Activated CD4-positive, alpha-beta T cell treated with anti-CD3 and anti-CD28 coated beads for 36 hours (primary cell): ENCODE measurements at regions of chr4 and their contacts with region 1.

Region 1: GRCh38 chr4:88523325-88524129 is at the start of gene PYURF:
- DNase-seq: peak; percentile 88
- ATAC-seq: peak; percentile 87
- H3K4me3 Mint-ChIP-seq: peak within 1 kb of the TSS; percentile 92
- H3K27ac Mint-ChIP-seq: peak within 1 kb of the TSS; percentile 88
- H3K4me1 Mint-ChIP-seq: peaks cover 45% of the 10 kb centered on the region
- H3K27me3 Mint-ChIP-seq: no peaks in the 10 kb centered on the region
- total RNA-seq, gene PYURF: 27.3 to 44.1 TPM

Region 2: GRCh38 chr4:87624698-87625097 is 898.8 kb before region 1 on chr4:
- CTCF ChIA-PET with region 1: no interaction called
- POLR2A ChIA-PET with region 1: no interaction called
- intact Hi-C with region 1: no loop called
- DNase-seq: no peak
- ATAC-seq: no peak
- H3K4me3 Mint-ChIP-seq: no peak overlapping the region
- H3K27ac Mint-ChIP-seq: no peak overlapping the region
- H3K4me1 Mint-ChIP-seq: no peaks in the 10 kb centered on the region
- H3K27me3 Mint-ChIP-seq: peaks cover 2% of the 10 kb centered on the region

Region 3: DNA sequence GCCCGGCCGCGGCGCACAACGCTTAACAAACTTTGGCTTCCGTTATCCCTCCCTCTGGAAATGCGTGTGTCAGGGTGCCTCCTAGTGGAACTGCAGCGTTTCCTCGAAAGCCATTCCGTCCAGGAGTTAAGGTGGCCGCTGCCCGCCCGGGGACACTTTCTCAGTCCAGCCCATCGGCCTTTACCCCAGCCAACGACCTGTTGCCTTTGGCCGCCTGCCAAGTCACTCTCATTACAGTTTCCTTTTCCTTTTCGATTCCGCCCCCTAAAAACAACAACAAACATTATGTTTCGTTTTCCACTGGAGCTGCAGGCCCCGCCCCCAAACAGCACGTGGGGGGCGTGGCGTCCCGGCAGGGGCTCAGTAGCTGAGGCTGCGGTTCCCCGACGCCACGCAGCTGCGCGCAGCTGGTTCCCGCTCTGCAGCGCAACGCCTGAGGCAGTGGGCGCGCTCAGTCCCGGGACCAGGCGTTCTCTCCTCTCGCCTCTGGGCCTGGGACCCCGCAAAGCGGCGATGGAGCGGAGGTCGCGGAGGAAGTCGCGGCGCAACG is 66.7 kb before region 1 on chr4 and contains the start of gene HERC5:
- CTCF ChIA-PET with region 1: no interaction called
- POLR2A ChIA-PET with region 1: interaction called, 4 read pairs
- intact Hi-C with region 1: loop called in 1 of 2 experiments (anchors 2 kb)
- DNase-seq: peak; percentile 94
- ATAC-seq: peak; percentile 94
- H3K4me3 Mint-ChIP-seq: peak within 1 kb of the TSS; percentile 87
- H3K27ac Mint-ChIP-seq: peak within 1 kb of the TSS; percentile 100
- H3K4me1 Mint-ChIP-seq: peaks cover 7% of the 10 kb centered on the region
- H3K27me3 Mint-ChIP-seq: no peaks in the 10 kb centered on the region
- total RNA-seq, gene HERC5: 21.1 TPM

Region 4: GRCh38 chr4:88659055-88659889 is 135.7 kb after region 1 on chr4:
- CTCF ChIA-PET with region 1: interaction called, 5 read pairs
- POLR2A ChIA-PET with region 1: no interaction called
- intact Hi-C with region 1: loop called (anchors 1 to 5 kb)
- DNase-seq: peak; percentile 54
- ATAC-seq: peak; percentile 81
- H3K4me3 Mint-ChIP-seq: no peak overlapping the region
- H3K27ac Mint-ChIP-seq: no peak overlapping the region
- H3K4me1 Mint-ChIP-seq: peaks cover 7% of the 10 kb centered on the region
- H3K27me3 Mint-ChIP-seq: no peaks in the 10 kb centered on the region

Region 5: DNA sequence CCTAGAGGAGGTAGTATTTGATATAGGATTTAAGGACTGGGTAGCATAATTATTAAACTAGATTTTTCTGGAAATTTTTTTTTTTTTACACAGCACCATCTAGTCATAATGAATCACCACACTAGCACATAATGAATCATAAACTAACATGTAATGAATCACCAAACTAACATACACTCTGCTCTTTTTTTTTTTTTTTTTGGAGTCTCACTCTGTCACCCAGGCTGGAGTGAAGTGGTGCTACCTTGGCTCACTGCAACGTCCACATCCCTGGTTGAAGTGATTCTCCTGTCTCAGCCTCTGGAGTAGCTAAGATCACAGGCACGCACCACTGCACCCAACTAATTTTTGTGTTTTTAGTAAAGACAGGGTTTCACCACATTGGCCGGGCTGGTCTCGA is 440.9 kb after region 1 on chr4:
- CTCF ChIA-PET with region 1: no interaction called
- POLR2A ChIA-PET with region 1: no interaction called
- intact Hi-C with region 1: loop called in 1 of 2 experiments (anchors 10 kb)
- DNase-seq: peak; percentile 26
- ATAC-seq: peak; percentile 92
- H3K4me3 Mint-ChIP-seq: no peak overlapping the region
- H3K27ac Mint-ChIP-seq: no peak overlapping the region
- H3K4me1 Mint-ChIP-seq: peaks cover 11% of the 10 kb centered on the region
- H3K27me3 Mint-ChIP-seq: peaks cover 2% of the 10 kb centered on the region

Region 6: GRCh38 chr4:89110986-89111832 is 587.7 kb after region 1 on chr4 and contains the start of gene TIGD2:
- CTCF ChIA-PET with region 1: no interaction called
- POLR2A ChIA-PET with region 1: no interaction called
- intact Hi-C with region 1: loop called in 1 of 2 experiments (anchors 2 kb)
- DNase-seq: peak; percentile 93
- ATAC-seq: peak; percentile 95
- H3K4me3 Mint-ChIP-seq: peak within 1 kb of the TSS; percentile 73
- H3K27ac Mint-ChIP-seq: peak within 1 kb of the TSS; percentile 86
- H3K4me1 Mint-ChIP-seq: peaks cover 18% of the 10 kb centered on the region
- H3K27me3 Mint-ChIP-seq: peaks cover 16% of the 10 kb centered on the region
- total RNA-seq, gene TIGD2: 2.1 to 2.3 TPM